ENCODE measurements at regions of chr3 and their contacts with region 1.

Region 1: DNA sequence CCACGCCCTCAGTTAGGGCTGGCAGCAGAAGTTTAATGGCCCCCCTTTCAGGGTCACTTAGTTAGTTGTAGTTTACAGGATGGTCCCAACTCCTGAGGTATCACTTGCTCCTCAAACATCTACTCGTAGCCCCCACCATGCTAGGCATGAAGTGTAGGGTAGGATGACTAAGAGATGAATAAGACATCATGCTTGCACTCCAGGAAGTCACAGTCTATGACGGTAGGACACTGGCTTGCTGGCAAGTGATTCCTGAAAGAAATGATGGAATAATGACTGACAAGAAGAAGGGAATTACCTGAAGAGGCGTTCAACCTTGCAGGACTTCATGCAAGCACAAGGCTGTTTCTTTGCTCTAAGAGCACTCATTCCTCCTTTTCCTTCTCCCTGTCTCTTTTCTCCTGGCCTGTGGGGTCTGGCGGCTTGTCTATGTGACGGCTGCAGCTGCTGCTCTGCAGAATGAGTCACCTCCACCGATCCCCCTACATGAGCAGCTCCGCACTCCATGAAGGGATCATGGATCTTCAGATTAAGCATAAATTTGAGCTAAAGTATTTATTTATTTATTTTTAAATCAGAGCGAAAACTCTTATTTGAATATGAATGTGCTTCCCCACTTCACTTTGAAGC is 82.9 kb upstream of the BOC start:
- DNase-seq: no peak
- ATAC-seq: no peak
- H3K4me3 ChIP-seq: no peak overlapping the region
- H3K4me1 ChIP-seq: no peaks in the 10 kb centered on the region
- CTCF ChIP-seq: no peak

Region 2: GRCh38 chr3:113053169-113053568 is 75.3 kb before region 1 on chr3:
- intact Hi-C with region 1: no loop called
- DNase-seq: no peak
- ATAC-seq: no peak
- H3K4me3 ChIP-seq: no peak overlapping the region
- H3K4me1 ChIP-seq: no peaks in the 10 kb centered on the region
- CTCF ChIP-seq: no peak

Region 3: GRCh38 chr3:113063126-113063909 is 65.2 kb before region 1 on chr3:
- intact Hi-C with region 1: loop called in 1 of 2 experiments (anchors 10 kb)
- DNase-seq: no peak
- ATAC-seq: no peak
- H3K4me3 ChIP-seq: no peak overlapping the region
- H3K4me1 ChIP-seq: no peaks in the 10 kb centered on the region
- CTCF ChIP-seq: no peak

Region 4: DNA sequence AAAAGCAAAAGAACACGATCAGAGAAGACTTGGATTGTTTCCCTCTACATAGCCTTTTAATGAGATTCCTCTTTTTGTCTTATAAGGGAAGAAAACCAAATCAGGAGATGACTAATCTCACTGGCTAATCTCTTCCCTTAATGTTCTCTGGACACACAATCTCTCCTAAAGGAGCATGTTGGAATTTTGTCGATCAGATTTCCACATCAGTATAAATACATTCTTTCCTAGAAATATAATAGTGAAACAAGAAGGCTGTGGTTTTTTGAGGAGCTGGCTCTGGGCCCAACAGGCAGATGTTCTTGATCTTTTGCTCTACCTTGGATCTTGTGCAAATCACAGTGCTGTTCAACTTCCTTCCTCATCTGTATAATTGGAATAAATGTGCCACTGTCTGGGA is 43.7 kb before region 1 on chr3:
- intact Hi-C with region 1: no loop called
- DNase-seq: peak in 2 of 3 donors; percentile 35 to 39
- ATAC-seq: peak; percentile 10
- H3K4me3 ChIP-seq: no peak overlapping the region
- H3K4me1 ChIP-seq: no peaks in the 10 kb centered on the region
- CTCF ChIP-seq: no peak